Dorsolateral prefrontal cortex (tissue), 120 donors: ENCODE measurements at regions of chr6 and their contacts with region 1.

Region 1: DNA sequence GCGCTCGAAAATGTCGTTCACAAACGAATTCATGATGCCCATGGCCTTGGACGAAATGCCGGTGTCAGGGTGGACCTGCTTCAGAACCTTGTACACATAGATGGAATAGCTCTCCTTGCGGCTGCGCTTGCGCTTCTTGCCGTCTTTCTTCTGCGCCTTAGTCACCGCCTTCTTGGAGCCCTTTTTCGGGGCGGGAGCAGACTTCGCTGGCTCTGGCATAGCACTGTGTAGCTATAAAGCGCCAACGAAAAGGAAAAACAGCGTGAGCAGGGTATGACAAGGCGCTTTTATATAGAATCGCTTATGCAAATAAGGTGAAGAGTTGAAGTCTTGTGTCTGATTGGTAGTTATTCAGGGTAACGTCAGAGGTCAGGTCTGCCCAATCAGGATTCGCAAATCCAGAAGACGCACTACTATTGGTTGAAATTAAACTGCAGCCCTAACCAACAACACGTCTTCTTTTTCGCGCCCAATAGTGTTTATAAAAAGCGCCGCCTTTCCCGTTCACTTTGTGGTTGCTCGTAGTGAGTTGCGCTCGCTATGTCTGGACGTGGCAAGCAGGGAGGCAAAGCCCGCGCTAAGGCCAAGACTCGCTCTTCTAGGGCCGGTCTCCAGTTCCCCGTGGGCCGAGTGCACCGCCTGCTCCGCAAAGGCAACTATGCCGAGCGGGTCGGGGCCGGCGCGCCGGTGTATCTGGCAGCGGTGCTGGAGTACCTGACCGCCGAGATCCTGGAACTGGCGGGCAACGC is 114.8 kb upstream of the PRSS16 start:
- DNase-seq: peak in 9 of 10 donors; percentile 64 to 92 (median 79)
- H3K4me3 ChIP-seq: peak overlapping the region; percentile 42 to 75 (median 64)
- H3K27ac ChIP-seq: peak overlapping the region in 56 of 59 donors; percentile 3 to 89 (median 78)
- H3K27me3 ChIP-seq: peaks cover 0 to 47% (median 8%) of the 10 kb centered on the region in 45 donors
- CTCF ChIP-seq: peak in 4 of 56 donors; percentile 6 to 19 (median 14)

Region 2: GRCh38 chr6:26204332-26205165 is 928.2 kb before region 1 on chr6:
- intact Hi-C with region 1: loop called in 1 of 2 experiments (anchors 5 kb)
- DNase-seq: peak; percentile 90 to 99 (median 96)
- H3K4me3 ChIP-seq: peak overlapping the region; percentile 57 to 100 (median 82)
- H3K27ac ChIP-seq: peak overlapping the region; percentile 73 to 99 (median 94)
- H3K27me3 ChIP-seq: peaks cover 0 to 18% (median 0%) of the 10 kb centered on the region in 45 donors
- CTCF ChIP-seq: peak in 51 of 56 donors; percentile 20 to 71 (median 51)

Region 3: GRCh38 chr6:27146706-27147505 is 14.2 kb after region 1 on chr6:
- intact Hi-C with region 1: loop called in 1 of 2 experiments (anchors 2 kb)
- DNase-seq: peak in 9 of 10 donors; percentile 26 to 77 (median 67)
- H3K4me3 ChIP-seq: peak overlapping the region; percentile 47 to 90 (median 69)
- H3K27ac ChIP-seq: peak overlapping the region; percentile 40 to 91 (median 83)
- H3K27me3 ChIP-seq: peaks cover 0 to 19% (median 0%) of the 10 kb centered on the region in 45 donors
- CTCF ChIP-seq: peak in 3 of 56 donors; percentile 10 to 28 (median 15)

Region 4: DNA sequence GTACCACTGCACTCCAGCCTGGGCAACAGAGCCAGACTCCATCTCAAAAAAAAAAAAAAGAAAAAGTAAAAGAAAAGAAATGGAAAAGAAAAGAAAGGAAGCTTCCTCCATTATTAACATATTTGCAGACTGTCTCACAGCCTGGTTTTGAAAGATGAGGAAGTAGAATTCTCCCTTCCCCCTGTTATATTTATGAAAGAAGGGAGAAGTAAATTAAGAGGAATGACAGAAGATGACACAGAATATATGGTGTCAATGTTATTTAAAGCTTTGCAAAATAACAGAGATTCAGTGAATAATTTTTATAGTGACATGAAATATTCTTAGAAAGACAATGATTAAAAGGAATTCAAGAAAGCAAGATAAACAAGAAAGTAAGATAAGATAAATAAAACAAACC is 31.1 kb after region 1 on chr6:
- intact Hi-C with region 1: no loop called
- DNase-seq: no peak
- H3K4me3 ChIP-seq: no peak overlapping the region
- H3K27ac ChIP-seq: no peak overlapping the region
- H3K27me3 ChIP-seq: no peaks in the 10 kb centered on the region
- CTCF ChIP-seq: no peak

Region 5: GRCh38 chr6:27177485-27178406 is 45.0 kb after region 1 on chr6:
- intact Hi-C with region 1: loop called in 1 of 2 experiments (anchors 2 kb)
- DNase-seq: peak; percentile 63 to 89 (median 83)
- H3K4me3 ChIP-seq: peak overlapping the region; percentile 55 to 100 (median 95)
- H3K27ac ChIP-seq: peak overlapping the region in 53 of 59 donors; percentile 28 to 91 (median 78)
- H3K27me3 ChIP-seq: peaks cover 0 to 18% (median 0%) of the 10 kb centered on the region in 45 donors
- CTCF ChIP-seq: peak in 42 of 56 donors; percentile 4 to 55 (median 35)